Sciatic nerve (tissue), 2 donors: ENCODE measurements at regions of chr3 and their contacts with region 1.

Region 1: GRCh38 chr3:19519134-19519533 is 370.8 kb downstream of the KCNH8 start:
- DNase-seq: no peak
- ATAC-seq: no peak

Region 2: GRCh38 chr3:19046440-19046839 is 472.7 kb before region 1 on chr3:
- intact Hi-C with region 1: loop called (anchors 10 kb)
- DNase-seq: no peak
- ATAC-seq: no peak

Region 3: GRCh38 chr3:19357947-19358346 is 161.2 kb before region 1 on chr3:
- intact Hi-C with region 1: no loop called
- DNase-seq: no peak
- ATAC-seq: no peak